H1 (cell line): ENCODE measurements at regions of chr19 and their contacts with region 1.

Region 1: GRCh38 chr19:10717356-10718204 is at the start of gene DNM2:
- DNase-seq: peak; percentile 99 to 100
- H3K4me3 ChIP-seq: peak within 1 kb of the TSS; percentile 89 to 95 (median 92)
- H3K27ac ChIP-seq: peak within 1 kb of the TSS; percentile 67; the same call in 1 of the 2 replicates
- H3K4me1 ChIP-seq: peaks cover 0 to 14% (median 6%) of the 10 kb centered on the region in 4 experiments; a peak in 5 of 7 replicates
- H3K27me3 ChIP-seq: no peaks in the 10 kb centered on the region
- CTCF ChIP-seq: peak; percentile 72 to 96 (median 78)
- EP300 ChIP-seq: peak in 1 of 2 experiments; percentile 78; a peak in 1 of 3 replicates
- POLR2A ChIP-seq: peak in 1 of 2 experiments; percentile 40; a peak in 1 of 3 replicates
- RAD21 ChIP-seq: peak; percentile 67 to 71
- total RNA-seq, gene DNM2: 120 TPM in 2 replicates

Region 2: DNA sequence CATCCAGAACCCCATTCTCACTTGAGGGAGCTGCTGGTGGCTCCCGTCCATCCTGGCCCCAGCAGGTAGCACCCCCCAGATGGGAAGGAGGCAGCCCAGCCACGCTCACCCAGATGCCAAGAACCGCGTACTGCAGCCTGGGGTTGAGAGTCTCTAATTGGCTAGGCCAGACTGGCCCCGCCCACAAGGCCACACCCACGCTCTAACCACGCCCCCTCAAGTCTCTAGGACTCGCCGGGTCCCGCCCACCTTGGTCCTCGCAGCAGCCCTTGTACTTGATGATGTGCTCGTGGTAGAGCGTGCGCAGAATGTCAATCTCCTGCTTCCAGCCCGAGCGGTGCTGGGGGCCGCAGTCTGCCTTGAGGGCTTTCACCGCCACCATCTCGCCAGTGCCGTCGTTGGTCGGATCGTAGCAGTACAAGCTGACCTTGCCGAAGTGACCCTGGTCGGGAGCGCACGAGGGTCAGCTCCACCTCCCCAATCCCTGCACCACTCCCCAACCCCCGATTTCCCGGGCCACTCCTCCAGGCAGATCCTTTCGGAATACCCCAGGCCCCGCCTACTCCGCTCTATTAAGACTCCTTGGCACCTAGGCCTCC is 363.7 kb before region 1 on chr19:
- CTCF ChIA-PET with region 1: no interaction called
- POLR2A ChIA-PET with region 1: no interaction called
- DNase-seq: peak; percentile 91 to 99
- H3K4me3 ChIP-seq: peak overlapping the region; percentile 61 to 69 (median 64)
- H3K27ac ChIP-seq: peak overlapping the region; percentile 68
- H3K4me1 ChIP-seq: peaks cover 0 to 11% (median 8%) of the 10 kb centered on the region in 4 experiments; a peak in 5 of 7 replicates
- H3K27me3 ChIP-seq: no peaks in the 10 kb centered on the region
- CTCF ChIP-seq: peak in 1 of 3 experiments; percentile 2; a peak in 1 of 4 replicates
- EP300 ChIP-seq: no peak; a peak in 1 of 3 replicates
- POLR2A ChIP-seq: peak in 1 of 2 experiments; percentile 79; a peak in 1 of 3 replicates
- RAD21 ChIP-seq: no peak

Region 3: DNA sequence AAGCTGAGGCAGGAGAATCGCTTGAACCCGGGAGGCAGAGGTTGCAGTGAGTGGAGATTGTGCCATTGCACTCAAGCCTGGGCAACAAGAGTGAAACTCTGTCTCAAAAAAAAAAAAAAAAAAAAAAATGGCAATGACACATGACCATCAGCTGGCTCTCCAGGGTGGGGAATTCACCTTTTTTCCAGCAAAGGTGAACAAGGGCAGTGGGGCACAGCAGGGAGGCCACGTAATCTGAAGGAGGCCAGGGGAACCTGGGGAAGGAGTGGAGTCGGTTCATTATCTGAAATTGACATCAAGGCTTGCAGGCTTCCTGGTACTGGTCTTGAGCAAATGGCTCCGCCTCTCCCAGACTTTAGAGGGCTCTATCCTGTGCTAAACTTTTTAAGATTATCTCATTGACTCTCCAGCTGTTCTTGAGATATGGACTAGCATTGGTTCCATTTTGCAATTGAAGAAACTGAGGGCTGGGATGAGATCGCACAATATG is 242.6 kb before region 1 on chr19:
- CTCF ChIA-PET with region 1: no interaction called
- POLR2A ChIA-PET with region 1: no interaction called
- DNase-seq: no peak
- H3K4me3 ChIP-seq: no peak overlapping the region
- H3K27ac ChIP-seq: no peak overlapping the region
- H3K4me1 ChIP-seq: peaks cover 0 to 4% (median 0%) of the 10 kb centered on the region in 4 experiments; a peak in 2 of 7 replicates
- H3K27me3 ChIP-seq: peaks cover 6 to 10% (median 9%) of the 10 kb centered on the region in 4 experiments
- CTCF ChIP-seq: no peak
- EP300 ChIP-seq: no peak
- POLR2A ChIP-seq: no peak
- RAD21 ChIP-seq: no peak

Region 4: DNA sequence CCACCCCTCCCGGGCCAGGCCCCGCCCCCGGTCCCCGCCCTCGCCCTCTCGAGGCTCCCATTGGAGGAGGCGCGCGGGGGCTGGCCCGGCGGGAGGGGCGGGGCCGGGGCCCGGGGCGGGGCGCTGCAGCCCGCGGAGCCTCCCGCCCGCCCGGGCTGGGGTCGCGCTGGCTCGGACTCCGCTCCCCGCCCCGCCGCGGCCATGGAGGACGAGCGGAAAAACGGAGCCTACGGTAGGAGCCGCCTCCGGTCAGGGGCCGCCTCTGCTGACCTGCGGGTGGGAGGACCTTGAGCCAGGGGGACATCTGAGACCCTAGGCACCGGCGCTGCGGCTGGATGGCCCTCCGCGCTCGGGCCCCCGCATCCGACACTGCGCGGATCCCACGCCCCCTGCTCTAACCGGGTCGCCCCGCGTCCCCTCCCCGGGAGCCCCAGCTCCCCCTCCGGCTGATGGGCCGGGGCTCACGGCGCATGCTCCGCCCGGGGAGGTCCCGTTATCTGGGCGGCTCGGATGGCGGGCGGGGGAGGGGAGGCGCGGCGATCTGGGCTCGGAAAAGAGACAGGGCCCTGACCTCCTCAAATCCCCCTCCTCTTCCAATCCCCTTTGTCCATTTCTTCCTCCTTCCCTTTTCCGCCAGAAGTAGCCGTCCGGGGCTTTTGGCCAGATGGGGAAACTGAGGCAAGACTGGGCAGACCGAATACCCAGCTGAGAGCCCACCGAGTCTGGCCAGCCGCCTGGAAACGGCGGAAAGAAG is 115.1 kb before region 1 on chr19:
- CTCF ChIA-PET with region 1: no interaction called
- POLR2A ChIA-PET with region 1: no interaction called
- DNase-seq: peak in 1 of 2 experiments; percentile 89
- H3K4me3 ChIP-seq: peak overlapping the region; percentile 79 to 98 (median 88)
- H3K27ac ChIP-seq: 0 out of 2 replicates have a peak overlapping the region, but pooled peaks have one; percentile 67
- H3K4me1 ChIP-seq: peaks cover 0 to 11% (median 7%) of the 10 kb centered on the region in 4 experiments; a peak in 6 of 7 replicates
- H3K27me3 ChIP-seq: no peaks in the 10 kb centered on the region
- CTCF ChIP-seq: no peak
- EP300 ChIP-seq: no peak
- POLR2A ChIP-seq: peak in 1 of 2 experiments; percentile 59; a peak in 2 of 3 replicates
- RAD21 ChIP-seq: no peak

Region 5: GRCh38 chr19:10701955-10702525 is 15.5 kb before region 1 on chr19:
- CTCF ChIA-PET with region 1: interaction called, 9 read pairs
- POLR2A ChIA-PET with region 1: interaction called, 1,874 read pairs
- DNase-seq: no peak
- H3K4me3 ChIP-seq: peak overlapping the region; percentile 79 to 92 (median 83)
- H3K27ac ChIP-seq: no peak overlapping the region
- H3K4me1 ChIP-seq: no peaks in the 10 kb centered on the region
- H3K27me3 ChIP-seq: no peaks in the 10 kb centered on the region
- CTCF ChIP-seq: peak in 2 of 3 experiments; percentile 6 to 12; a peak in 1 of 4 replicates
- EP300 ChIP-seq: no peak
- POLR2A ChIP-seq: no peak
- RAD21 ChIP-seq: no peak; a peak in 2 of 4 replicates

Region 6: GRCh38 chr19:10737722-10738121 is 20.1 kb after region 1 on chr19:
- CTCF ChIA-PET with region 1: interaction called, 3 read pairs
- POLR2A ChIA-PET with region 1: interaction called, 10 read pairs
- DNase-seq: no peak
- H3K4me3 ChIP-seq: no peak overlapping the region
- H3K27ac ChIP-seq: no peak overlapping the region
- H3K4me1 ChIP-seq: no peaks in the 10 kb centered on the region
- H3K27me3 ChIP-seq: no peaks in the 10 kb centered on the region
- CTCF ChIP-seq: no peak
- EP300 ChIP-seq: no peak
- POLR2A ChIP-seq: no peak
- RAD21 ChIP-seq: no peak

Region 7: DNA sequence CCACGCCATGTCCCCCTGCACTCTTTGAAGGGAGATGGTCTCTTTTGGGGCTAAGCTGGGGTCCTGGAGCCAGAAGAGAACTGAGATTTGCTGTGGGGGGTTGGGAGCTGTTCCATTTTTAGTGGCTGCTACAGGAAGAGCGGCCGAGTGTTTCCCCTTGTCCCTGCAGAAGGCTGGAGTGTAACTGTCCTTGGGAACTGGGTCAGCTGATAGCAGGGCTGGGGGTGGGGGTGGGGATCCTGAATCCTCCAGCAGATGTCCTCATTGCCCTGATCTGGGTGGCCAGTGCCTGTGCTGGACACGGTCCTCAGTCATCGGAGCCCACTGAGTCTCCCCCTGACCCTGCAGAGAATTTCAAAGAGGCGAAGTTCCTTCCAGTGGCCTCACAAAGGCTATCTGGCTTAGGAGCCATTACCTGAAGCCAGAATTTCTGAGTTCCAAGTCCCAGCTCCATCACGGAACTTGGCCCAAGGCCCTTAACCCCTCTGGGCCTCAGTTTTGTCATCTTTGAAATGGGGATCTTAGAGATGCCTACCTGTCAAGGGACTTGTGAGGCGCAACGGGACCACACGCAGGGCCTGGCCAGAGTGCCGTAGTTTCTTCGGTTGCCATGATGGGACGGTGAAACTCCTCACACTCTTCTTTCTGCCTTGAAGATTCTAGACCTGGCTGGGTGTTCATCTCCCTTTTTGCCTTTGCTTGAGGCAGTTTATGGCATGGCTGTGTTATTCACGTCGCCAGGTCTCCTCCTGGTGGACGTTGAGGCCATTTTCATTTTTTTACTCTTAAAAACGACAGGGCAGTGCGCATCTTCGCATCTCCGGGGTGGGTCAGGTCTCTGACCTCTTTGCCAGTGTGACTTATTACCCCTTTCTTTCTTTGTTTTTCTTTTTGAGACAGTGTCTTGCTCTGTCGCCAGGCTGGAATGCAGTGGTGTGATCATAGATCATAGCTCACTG is 52.2 kb after region 1 on chr19:
- CTCF ChIA-PET with region 1: interaction called, 15 read pairs
- POLR2A ChIA-PET with region 1: interaction called, 7 read pairs
- DNase-seq: no peak
- H3K4me3 ChIP-seq: no peak overlapping the region
- H3K27ac ChIP-seq: no peak overlapping the region; the same call in 1 of the 2 replicates
- H3K4me1 ChIP-seq: peaks cover 0 to 6% (median 1%) of the 10 kb centered on the region in 4 experiments; a peak in 1 of 7 replicates
- H3K27me3 ChIP-seq: no peaks in the 10 kb centered on the region
- CTCF ChIP-seq: peak in 2 of 3 experiments; percentile 15 to 18; a peak in 2 of 4 replicates
- EP300 ChIP-seq: no peak
- POLR2A ChIP-seq: no peak
- RAD21 ChIP-seq: peak; percentile 50 to 57

Region 8: DNA sequence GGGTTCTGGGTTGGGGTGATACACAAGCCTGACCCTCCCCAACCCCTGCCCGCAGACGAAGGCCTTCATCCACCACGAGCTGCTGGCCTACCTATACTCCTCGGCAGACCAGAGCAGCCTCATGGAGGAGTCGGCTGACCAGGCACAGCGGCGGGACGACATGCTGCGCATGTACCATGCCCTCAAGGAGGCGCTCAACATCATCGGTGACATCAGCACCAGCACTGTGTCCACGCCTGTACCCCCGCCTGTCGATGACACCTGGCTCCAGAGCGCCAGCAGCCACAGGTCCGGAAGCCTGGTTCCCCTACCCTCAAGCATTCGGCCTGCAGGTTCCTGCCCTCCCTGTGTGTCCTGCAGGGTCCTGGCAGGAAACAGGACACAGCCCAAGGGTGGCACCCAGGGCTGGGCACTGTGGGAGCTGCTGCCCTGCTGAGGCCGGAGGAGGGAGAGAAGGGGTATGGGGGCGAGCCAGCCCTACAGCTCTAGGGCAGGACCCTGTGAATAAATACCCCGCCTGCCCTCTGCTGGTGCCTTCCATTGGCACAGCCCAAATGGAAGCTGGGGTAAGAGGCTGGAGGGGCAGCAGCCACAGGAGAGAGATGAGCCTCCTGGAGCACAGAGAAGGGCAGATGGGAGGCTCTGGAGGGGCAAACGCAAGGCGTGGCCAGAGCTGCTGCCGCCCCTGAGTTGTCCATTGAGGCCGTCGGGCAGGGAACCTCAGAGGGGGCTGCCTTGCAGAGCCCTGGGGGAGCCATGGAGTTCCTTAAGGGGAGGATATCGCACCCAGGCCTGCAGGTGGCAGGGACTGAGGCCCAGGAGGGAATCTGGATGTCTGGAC is 111.6 kb after region 1 on chr19:
- CTCF ChIA-PET with region 1: interaction called, 13 read pairs
- POLR2A ChIA-PET with region 1: no interaction called
- DNase-seq: no peak
- H3K4me3 ChIP-seq: no peak overlapping the region
- H3K27ac ChIP-seq: 0 out of 2 replicates have a peak overlapping the region, but pooled peaks have one; percentile 51
- H3K4me1 ChIP-seq: no peaks in the 10 kb centered on the region
- H3K27me3 ChIP-seq: no peaks in the 10 kb centered on the region
- CTCF ChIP-seq: peak; percentile 35 to 73 (median 38)
- EP300 ChIP-seq: no peak
- POLR2A ChIP-seq: no peak
- RAD21 ChIP-seq: peak in 1 of 2 experiments; percentile 18; a peak in 1 of 4 replicates